IMR-90 (cell line): ENCODE measurements at regions of chr4 and their contacts with region 1.

Region 1: GRCh38 chr4:76449833-76450232 is 14.8 kb downstream of the SHROOM3 start:
- DNase-seq: no peak
- ATAC-seq: no peak
- H3K4me3 ChIP-seq: no peak overlapping the region
- H3K27ac ChIP-seq: no peak overlapping the region
- H3K4me1 ChIP-seq: no peaks in the 10 kb centered on the region
- H3K27me3 ChIP-seq: peaks cover 14% of the 10 kb centered on the region
- CTCF ChIP-seq: no peak
- POLR2A ChIP-seq: no peak
- RAD21 ChIP-seq: no peak

Region 2: GRCh38 chr4:76485450-76485849 is 35.6 kb after region 1 on chr4:
- CTCF ChIA-PET with region 1: no interaction called
- POLR2A ChIA-PET with region 1: no interaction called
- dilution Hi-C with region 1: no loop called
- in situ Hi-C with region 1: no loop called
- intact Hi-C with region 1: loop called (anchors 5 kb)
- DNase-seq: no peak
- ATAC-seq: no peak
- H3K4me3 ChIP-seq: no peak overlapping the region
- H3K27ac ChIP-seq: no peak overlapping the region
- H3K4me1 ChIP-seq: no peaks in the 10 kb centered on the region
- H3K27me3 ChIP-seq: peaks cover 2% of the 10 kb centered on the region; the same call in 1 of the 2 replicates
- CTCF ChIP-seq: no peak
- POLR2A ChIP-seq: no peak
- RAD21 ChIP-seq: no peak

Region 3: DNA sequence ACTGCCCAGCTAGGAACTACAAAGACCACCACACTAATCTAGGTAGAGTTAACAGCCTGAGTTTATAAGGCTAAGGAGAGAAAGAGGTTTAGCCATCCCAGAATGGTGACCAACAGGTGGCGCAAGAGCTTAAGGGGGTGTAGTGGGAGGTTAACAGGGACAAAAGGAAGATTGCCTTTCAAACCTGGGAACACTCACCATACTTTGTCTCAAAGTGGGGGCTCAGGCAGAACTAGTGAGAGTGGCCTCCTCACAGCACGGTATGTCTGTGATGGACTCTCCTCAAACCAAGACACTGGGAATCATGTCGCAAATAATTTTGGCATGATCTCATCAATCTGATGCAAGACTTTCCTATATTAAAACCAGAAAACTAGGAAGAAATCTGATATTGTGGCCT is 602.5 kb after region 1 on chr4:
- CTCF ChIA-PET with region 1: no interaction called
- POLR2A ChIA-PET with region 1: no interaction called
- dilution Hi-C with region 1: no loop called
- in situ Hi-C with region 1: no loop called
- intact Hi-C with region 1: no loop called
- DNase-seq: peak; percentile 69
- ATAC-seq: peak; percentile 38
- H3K4me3 ChIP-seq: no peak overlapping the region
- H3K27ac ChIP-seq: peak overlapping the region; percentile 39; the same call in 1 of the 2 replicates
- H3K4me1 ChIP-seq: peaks cover 2% of the 10 kb centered on the region
- H3K27me3 ChIP-seq: no peaks in the 10 kb centered on the region
- CTCF ChIP-seq: peak; percentile 33
- POLR2A ChIP-seq: no peak; the same call in 1 of the 2 replicates
- RAD21 ChIP-seq: 0 out of 2 replicates have a peak, but pooled peaks have one; percentile 16